Naive thymus-derived CD8-positive, alpha-beta T cell (primary cell): ENCODE measurements at regions of chr19 and their contacts with region 1.

Region 1: DNA sequence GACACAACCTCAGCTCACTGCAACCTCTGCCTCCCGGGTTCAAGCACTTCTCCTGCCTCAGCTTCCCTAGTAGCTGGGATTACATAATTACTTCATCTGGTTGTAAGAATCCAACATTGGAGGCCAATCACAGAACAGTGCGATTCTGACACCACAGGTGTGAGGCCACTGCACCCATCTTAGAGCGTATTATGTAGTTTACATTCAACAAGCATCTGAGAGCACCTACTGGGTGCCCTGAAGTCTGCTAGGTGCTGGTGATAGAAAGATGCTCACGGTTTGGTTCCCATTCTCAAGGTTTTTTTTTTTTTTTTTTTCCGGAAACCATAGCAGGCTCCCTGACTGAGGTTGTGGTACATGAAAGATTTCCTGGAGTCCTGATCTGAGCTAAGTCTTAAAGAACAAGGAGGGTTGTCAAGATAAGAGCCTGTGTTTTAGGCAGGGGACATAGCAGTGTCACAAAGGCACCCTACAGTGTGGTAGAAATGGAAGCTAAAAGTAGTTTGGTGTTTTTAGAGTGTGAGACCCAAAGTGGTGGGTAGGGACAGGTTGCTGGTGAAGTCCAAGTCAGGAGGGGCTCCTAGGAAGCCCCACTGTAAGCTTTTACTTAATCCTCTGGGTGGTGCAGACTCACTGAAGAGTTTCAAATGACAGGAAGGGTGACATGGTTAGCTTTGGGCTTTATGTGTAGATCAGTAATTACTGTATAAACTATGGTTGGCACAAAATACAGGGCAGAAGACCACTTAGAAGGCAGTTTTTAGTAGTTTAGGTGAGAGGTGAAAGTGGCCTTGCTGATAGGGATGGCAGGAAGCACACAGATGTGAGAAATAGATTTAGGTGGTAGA is 15.2 kb downstream of the SAE1 start:
- DNase-seq: peak in 8 of 10 donors; percentile 29 to 80 (median 49)
- ATAC-seq: peak; percentile 95 to 98
- H3K4me3 Mint-ChIP-seq: peak overlapping the region; percentile 55 to 83 (median 74)
- H3K27ac Mint-ChIP-seq: peak overlapping the region; percentile 82 to 94 (median 91)
- H3K4me1 Mint-ChIP-seq: peaks cover 28 to 82% (median 56%) of the 10 kb centered on the region in 4 donors
- H3K27me3 Mint-ChIP-seq: no peaks in the 10 kb centered on the region

Region 2: GRCh38 chr19:46600384-46601317 is 545.2 kb before region 1 on chr19:
- POLR2A ChIA-PET with region 1: no interaction called
- DNase-seq: peak; percentile 93 to 100 (median 98)
- ATAC-seq: peak; percentile 85
- H3K4me3 Mint-ChIP-seq: peak overlapping the region; percentile 95 to 100 (median 98)
- H3K27ac Mint-ChIP-seq: peak overlapping the region; percentile 100
- H3K4me1 Mint-ChIP-seq: peaks cover 22 to 60% (median 35%) of the 10 kb centered on the region in 4 donors
- H3K27me3 Mint-ChIP-seq: peaks cover 0 to 2% (median 0%) of the 10 kb centered on the region in 5 donors

Region 3: DNA sequence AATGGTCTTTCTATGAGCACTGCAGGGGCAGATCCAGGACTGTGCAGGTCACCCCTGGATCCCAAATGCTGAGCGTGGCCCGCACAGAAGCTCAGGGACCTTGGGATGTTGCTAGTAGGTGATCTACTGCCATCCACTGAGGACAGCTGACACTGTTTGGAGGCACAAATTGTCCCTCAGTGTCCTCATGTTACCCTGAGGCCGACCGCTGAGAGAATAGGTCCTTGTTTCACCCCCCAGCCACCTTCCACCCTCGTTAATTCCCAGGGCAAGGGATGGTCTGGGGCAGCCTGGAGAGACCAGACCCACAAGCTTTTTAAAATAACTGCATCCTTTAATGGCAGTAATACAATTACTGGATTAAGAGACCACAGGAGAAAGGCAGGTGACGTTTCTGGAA is 82.0 kb before region 1 on chr19:
- POLR2A ChIA-PET with region 1: no interaction called
- DNase-seq: no peak
- ATAC-seq: no peak
- H3K4me3 Mint-ChIP-seq: no peak overlapping the region
- H3K27ac Mint-ChIP-seq: no peak overlapping the region
- H3K4me1 Mint-ChIP-seq: no peaks in the 10 kb centered on the region
- H3K27me3 Mint-ChIP-seq: no peaks in the 10 kb centered on the region

Region 4: DNA sequence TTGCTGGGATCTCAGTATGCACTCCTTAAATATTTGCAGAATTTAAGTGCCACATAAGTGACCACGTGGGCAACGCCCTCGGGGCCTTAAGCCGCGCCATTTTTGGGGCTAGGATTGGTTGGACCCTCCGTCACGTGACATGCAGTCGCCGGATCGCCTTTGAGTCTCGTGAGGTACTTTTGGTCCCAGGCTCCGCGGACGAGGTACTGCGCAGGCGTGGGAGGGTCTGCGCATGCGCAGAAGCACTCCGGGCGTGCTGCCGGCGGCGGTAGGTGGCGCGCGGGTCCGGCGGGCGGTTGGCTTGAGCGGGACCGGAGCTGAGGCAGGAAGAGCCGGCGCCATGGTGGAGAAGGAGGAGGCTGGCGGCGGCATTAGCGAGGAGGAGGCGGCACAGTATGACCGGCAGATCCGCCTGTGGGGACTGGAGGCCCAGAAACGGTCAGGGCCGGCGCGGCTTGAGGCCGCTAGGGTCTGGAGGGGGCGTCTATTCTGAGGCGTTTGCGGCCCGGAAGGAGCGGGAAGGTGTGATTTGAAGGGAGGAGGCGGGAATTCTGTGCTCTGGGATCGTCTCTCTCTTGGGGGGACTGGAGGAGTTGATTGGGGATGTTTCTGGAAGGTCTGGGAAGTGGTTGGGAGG is 15.2 kb before region 1 on chr19 and contains the start of gene SAE1:
- POLR2A ChIA-PET with region 1: interaction called, 20 read pairs
- DNase-seq: peak; percentile 80 to 98 (median 90)
- ATAC-seq: peak; percentile 90 to 93
- H3K4me3 Mint-ChIP-seq: peak within 1 kb of the TSS; percentile 97 to 100 (median 99)
- H3K27ac Mint-ChIP-seq: peak within 1 kb of the TSS; percentile 92 to 98 (median 94)
- H3K4me1 Mint-ChIP-seq: peaks cover 35 to 58% (median 54%) of the 10 kb centered on the region in 4 donors
- H3K27me3 Mint-ChIP-seq: peaks cover 0 to 4% (median 0%) of the 10 kb centered on the region in 5 donors
- polyA plus RNA-seq, gene SAE1: 158 to 174 (median 159) TPM

Region 5: GRCh38 chr19:47157431-47158321 is 11.8 kb after region 1 on chr19:
- POLR2A ChIA-PET with region 1: interaction called, 53 read pairs
- DNase-seq: peak in 6 of 10 donors; percentile 4 to 52 (median 38)
- ATAC-seq: peak; percentile 21 to 23
- H3K4me3 Mint-ChIP-seq: peak overlapping the region; percentile 61 to 91 (median 82)
- H3K27ac Mint-ChIP-seq: peak overlapping the region; percentile 83 to 98 (median 93)
- H3K4me1 Mint-ChIP-seq: peaks cover 28 to 77% (median 65%) of the 10 kb centered on the region in 4 donors
- H3K27me3 Mint-ChIP-seq: no peaks in the 10 kb centered on the region

Region 6: GRCh38 chr19:47210689-47211316 is 64.9 kb after region 1 on chr19:
- POLR2A ChIA-PET with region 1: interaction called, 11 read pairs
- DNase-seq: peak; percentile 58 to 87 (median 78)
- ATAC-seq: peak; percentile 74 to 89
- H3K4me3 Mint-ChIP-seq: peak overlapping the region in 6 of 10 donors; percentile 5 to 46 (median 23)
- H3K27ac Mint-ChIP-seq: peak overlapping the region; percentile 7 to 86 (median 80)
- H3K4me1 Mint-ChIP-seq: peaks cover 8 to 29% (median 17%) of the 10 kb centered on the region in 4 donors
- H3K27me3 Mint-ChIP-seq: no peaks in the 10 kb centered on the region

Region 7: GRCh38 chr19:47256688-47257443 is 111.0 kb after region 1 on chr19:
- POLR2A ChIA-PET with region 1: interaction called, 12 read pairs
- DNase-seq: peak; percentile 94 to 99 (median 98)
- ATAC-seq: peak; percentile 74 to 82
- H3K4me3 Mint-ChIP-seq: peak overlapping the region; percentile 89 to 97 (median 93)
- H3K27ac Mint-ChIP-seq: peak overlapping the region; percentile 93 to 99 (median 97)
- H3K4me1 Mint-ChIP-seq: peaks cover 38 to 53% (median 45%) of the 10 kb centered on the region in 4 donors
- H3K27me3 Mint-ChIP-seq: no peaks in the 10 kb centered on the region